CD4-positive, alpha-beta memory T cell (primary cell): ENCODE measurements at regions of chr1 and their contacts with region 1.

Region 1: DNA sequence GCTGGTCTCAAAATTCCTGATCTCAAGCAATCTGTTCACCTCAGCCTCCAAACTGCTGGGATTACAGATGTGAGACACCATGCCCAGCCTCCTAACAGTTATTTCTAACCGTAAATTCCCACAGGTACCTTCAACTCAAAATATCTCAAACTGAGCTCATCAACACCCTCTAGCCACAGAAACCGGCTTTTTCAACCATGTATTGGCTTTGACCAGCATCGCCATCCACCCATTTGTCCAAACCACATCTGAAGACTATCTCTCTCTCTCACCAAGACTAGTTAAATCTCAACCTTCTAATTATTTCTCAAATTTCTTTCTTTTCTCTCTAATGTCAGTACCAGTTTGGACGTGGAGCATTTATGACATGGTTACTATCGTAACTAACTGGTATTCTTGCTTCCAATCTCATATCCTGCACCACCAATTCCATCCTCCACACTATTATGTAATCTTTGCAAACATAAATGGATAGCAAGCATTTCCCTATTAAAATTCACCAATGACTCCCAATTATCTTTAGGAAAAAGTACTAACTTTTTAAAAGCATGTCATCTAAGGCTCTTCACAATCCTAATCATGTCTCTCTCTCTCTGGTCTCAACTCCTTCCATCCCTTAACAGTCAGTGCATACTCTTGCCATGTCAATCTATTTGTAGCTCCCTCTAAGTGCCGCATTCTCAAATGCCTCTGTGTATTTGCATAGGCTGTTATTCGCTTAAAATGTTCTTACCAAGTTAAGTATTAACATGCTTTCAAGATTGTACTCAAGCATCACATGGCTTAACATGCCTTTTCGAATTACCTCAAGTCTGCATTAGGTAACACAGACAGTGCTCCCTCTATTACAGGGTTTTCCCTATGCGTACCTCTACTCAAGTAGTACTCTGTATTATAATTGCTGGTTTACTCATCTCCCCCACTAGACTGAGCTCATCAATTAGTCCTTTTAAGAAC is 18.1 kb downstream of the RSBN1 start:
- DNase-seq: no peak
- H3K4me3 ChIP-seq: no peak overlapping the region
- H3K4me3 Mint-ChIP-seq: peak overlapping the region in 5 of 8 donors; percentile 1 to 35 (median 19)
- H3K27ac ChIP-seq: no peak overlapping the region
- H3K27ac Mint-ChIP-seq: peak overlapping the region in 6 of 7 donors; percentile 18 to 86 (median 60)
- H3K4me1 ChIP-seq: peaks cover 56% of the 10 kb centered on the region
- H3K4me1 Mint-ChIP-seq: peaks cover 47 to 84% (median 60%) of the 10 kb centered on the region in 4 donors
- H3K27me3 ChIP-seq: no peaks in the 10 kb centered on the region
- H3K27me3 Mint-ChIP-seq: no peaks in the 10 kb centered on the region

Region 2: GRCh38 chr1:113759333-113760101 is 34.6 kb before region 1 on chr1 and contains the start of gene PHTF1:
- CTCF ChIA-PET with region 1: interaction called, 4 read pairs
- POLR2A ChIA-PET with region 1: interaction called, 19 read pairs
- intact Hi-C with region 1: loop called (anchors 5 kb)
- DNase-seq: peak in 4 of 5 donors; percentile 33 to 70 (median 46)
- H3K4me3 ChIP-seq: peak within 1 kb of the TSS; percentile 59 to 77
- H3K4me3 Mint-ChIP-seq: peak within 1 kb of the TSS; percentile 92 to 98 (median 94)
- H3K27ac ChIP-seq: peak within 1 kb of the TSS; percentile 91
- H3K27ac Mint-ChIP-seq: peak within 1 kb of the TSS; percentile 94 to 98 (median 97)
- H3K4me1 ChIP-seq: peaks cover 16% of the 10 kb centered on the region
- H3K4me1 Mint-ChIP-seq: peaks cover 16 to 36% (median 25%) of the 10 kb centered on the region in 4 donors
- H3K27me3 ChIP-seq: no peaks in the 10 kb centered on the region
- H3K27me3 Mint-ChIP-seq: no peaks in the 10 kb centered on the region
- total RNA-seq, gene PHTF1: 8.7 to 9.8 TPM